ENCODE measurements at regions of chr1 and their contacts with region 1.

Region 1: DNA sequence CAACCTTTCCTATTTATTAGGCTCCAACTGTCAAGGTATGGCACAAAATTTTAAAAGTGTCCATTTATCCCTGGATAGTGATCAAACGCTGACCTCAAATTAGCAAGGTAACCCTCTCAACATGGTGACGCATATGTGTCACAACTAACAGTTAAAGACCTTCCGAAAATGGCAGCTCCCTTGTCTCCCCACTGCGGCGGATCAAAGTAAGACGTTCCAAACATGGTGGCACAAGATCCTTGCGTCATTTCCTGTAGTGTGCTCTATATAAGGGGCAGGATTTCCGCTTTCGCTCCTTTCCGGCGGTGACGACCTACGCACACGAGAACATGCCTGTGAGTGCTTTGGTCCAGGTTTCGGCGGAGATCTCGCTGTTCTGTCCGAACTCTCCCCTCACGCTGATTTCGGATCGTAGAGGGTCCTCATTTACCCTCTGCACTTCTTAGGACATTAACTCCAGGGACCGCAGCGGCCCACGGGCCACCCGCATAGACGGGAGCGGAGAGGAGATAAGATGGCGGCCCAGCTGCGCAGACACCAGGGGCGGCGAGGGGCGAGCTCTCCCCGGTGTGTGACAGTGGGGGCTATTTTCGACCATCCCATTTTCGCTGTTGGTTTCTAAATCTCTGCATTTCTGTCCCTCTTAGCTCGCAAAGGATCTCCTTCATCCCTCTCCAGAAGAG is at the start of gene RPS27:
- DNase-seq: peak; percentile 86
- H3K4me3 ChIP-seq: peak within 1 kb of the TSS; percentile 71
- H3K27me3 ChIP-seq: no peaks in the 10 kb centered on the region
- CTCF ChIP-seq: no peak
- polyA plus RNA-seq, gene RPS27: 8,584 and 9,070 TPM in 2 replicates

Region 2: GRCh38 chr1:153790966-153791647 is 199.5 kb before region 1 on chr1:
- CTCF ChIA-PET with region 1: interaction called, 23 read pairs
- POLR2A ChIA-PET with region 1: no interaction called
- DNase-seq: peak; percentile 75
- H3K4me3 ChIP-seq: peak overlapping the region; percentile 18; the same call in 1 of the 2 replicates
- H3K27me3 ChIP-seq: no peaks in the 10 kb centered on the region
- CTCF ChIP-seq: no peak

Region 3: DNA sequence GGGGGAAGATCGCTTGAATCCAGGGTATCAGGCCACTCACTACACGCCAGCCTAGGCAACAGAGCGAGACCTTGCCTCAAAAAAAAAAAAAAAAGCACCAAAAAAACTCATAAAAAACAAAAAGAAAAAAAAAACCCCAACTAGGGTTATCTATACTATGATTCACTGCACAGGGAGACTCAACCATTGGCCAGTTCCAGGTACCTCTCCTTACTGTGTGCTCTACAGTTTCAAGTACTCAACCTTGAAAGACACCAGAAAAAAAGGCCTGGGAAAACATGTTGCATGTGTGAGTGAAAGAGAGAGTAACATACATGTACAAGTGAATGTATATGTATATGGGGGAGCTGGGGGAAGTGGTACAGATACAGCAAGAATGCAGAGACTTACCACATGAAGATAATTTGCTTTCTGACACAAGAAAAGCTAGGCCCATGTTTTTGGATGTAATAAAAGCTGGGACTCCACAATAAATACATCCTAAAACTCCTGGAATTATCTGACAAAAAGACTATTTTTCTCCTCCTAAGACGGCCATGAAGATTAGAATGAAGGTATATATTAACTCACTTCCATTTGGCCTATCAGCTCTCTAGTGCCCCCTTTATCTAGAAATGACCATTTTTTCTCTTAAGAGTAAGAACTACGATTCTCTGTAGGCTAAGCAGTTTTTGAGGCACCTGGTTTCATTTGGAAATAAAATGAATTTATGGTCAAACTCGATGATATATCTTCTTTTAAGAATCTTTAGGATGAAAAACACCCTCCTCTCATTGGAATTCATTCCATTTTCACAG is 163.2 kb before region 1 on chr1:
- CTCF ChIA-PET with region 1: interaction called, 15 read pairs
- POLR2A ChIA-PET with region 1: no interaction called
- DNase-seq: no peak
- H3K4me3 ChIP-seq: no peak overlapping the region
- H3K27me3 ChIP-seq: no peaks in the 10 kb centered on the region
- CTCF ChIP-seq: no peak

Region 4: GRCh38 chr1:153912349-153912748 is 78.3 kb before region 1 on chr1:
- CTCF ChIA-PET with region 1: no interaction called
- POLR2A ChIA-PET with region 1: no interaction called
- DNase-seq: no peak
- H3K4me3 ChIP-seq: no peak overlapping the region
- H3K27me3 ChIP-seq: no peaks in the 10 kb centered on the region
- CTCF ChIP-seq: no peak

Region 5: GRCh38 chr1:153967082-153968000 is 23.3 kb before region 1 on chr1 and contains the start of gene CREB3L4:
- CTCF ChIA-PET with region 1: interaction called, 26 read pairs
- POLR2A ChIA-PET with region 1: interaction called, 6 read pairs
- DNase-seq: peak; percentile 88
- H3K4me3 ChIP-seq: peak within 1 kb of the TSS; percentile 53
- H3K27me3 ChIP-seq: no peaks in the 10 kb centered on the region
- CTCF ChIP-seq: peak; percentile 58
- polyA plus RNA-seq, gene CREB3L4: 8.0 and 8.7 TPM in 2 replicates

Region 6: DNA sequence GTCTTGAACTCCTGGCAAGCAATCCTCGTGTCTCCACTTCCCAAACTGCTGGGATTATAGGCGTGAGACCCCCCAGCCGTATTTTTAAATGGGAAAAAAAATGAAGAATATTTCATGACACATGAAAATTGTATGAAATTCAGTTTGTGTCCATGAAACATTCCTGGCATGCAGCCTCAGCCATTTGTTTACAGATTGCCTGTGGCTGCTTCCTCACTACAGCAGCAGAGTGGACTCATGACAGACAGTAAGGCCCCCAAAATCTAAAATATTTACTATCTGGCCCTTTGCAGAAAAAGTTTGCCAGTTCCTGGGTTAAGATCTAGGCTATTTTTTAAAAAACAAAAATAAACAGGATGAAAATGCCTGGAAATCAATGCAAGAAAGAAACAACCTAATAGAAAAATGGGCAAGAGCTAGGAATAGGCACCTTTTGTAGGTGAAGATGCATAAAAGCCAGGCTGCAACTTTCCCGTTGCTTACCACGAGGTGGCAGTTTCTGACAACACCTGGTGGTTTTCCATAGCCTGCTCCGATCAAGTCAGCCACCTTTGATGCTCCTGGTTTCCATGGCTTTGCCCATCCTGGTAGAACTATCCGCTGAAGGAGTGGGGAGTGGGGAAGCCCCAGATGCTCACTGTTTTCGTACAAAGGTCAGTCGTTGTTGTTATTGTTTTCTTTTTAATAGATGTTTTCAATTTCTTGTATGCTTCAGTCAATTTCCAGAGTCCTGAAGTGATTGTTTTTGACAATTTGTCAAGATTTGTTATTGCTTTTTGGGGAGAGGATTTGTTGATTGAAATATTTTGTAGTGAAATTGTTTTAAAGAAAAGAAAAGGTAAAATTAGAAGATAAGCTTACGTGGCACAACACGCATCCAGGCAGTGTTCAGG is 543.6 kb after region 1 on chr1:
- CTCF ChIA-PET with region 1: no interaction called
- POLR2A ChIA-PET with region 1: interaction called, 10 read pairs
- DNase-seq: no peak
- H3K4me3 ChIP-seq: no peak overlapping the region
- H3K27me3 ChIP-seq: peaks cover 10% of the 10 kb centered on the region
- CTCF ChIP-seq: peak; percentile 45